Activated naive CD4-positive, alpha-beta T cell treated with anti-CD3 and anti-CD28 coated beads for 36 hours (primary cell): ENCODE measurements at regions of chr14 and their contacts with region 1.

Region 1: DNA sequence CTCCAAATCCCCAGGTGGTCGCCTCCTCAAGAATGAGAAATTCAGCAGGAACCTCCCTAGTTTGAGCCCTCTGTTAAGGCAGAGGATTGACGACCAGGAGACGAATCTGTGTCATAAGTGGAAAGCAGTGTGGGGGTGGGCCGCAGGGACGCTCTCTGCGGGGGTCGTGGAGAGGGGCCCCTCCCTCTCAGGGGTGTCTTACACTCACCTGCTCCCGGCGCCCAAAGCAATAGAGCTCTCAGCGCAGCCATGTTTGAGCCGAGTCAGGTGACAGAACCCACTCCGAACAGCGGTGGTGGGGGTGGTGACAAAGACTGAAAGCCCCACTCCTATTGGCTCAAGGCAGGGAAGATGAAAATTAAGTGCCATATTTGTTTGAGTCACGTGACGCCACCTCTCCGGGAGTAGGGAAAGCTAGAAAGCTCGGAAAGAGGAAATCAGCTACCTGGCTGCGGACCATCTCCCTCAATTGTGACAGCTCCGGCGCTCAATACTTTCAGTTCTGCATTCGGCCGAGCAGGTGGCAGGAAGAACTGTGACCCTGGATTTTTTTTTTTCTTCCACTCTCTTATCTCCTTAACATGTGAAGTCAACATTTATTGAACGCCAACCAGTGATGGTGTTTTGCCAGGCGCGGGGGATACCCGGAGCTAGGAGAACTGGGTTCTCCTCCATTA is at the start of gene ZFYVE26:
- DNase-seq: peak; percentile 96
- H3K4me3 Mint-ChIP-seq: peak within 1 kb of the TSS; percentile 95
- H3K27ac Mint-ChIP-seq: peak within 1 kb of the TSS; percentile 91
- H3K4me1 Mint-ChIP-seq: peaks cover 46% of the 10 kb centered on the region
- H3K27me3 Mint-ChIP-seq: no peaks in the 10 kb centered on the region
- total RNA-seq, gene ZFYVE26: 11.7 to 12.1 TPM

Region 2: GRCh38 chr14:67599698-67600561 is 216.5 kb before region 1 on chr14 and contains the start of gene PIGH:
- CTCF ChIA-PET with region 1: no interaction called
- intact Hi-C with region 1: loop called (anchors 5 kb)
- DNase-seq: peak; percentile 95
- H3K4me3 Mint-ChIP-seq: peak within 1 kb of the TSS; percentile 84
- H3K27ac Mint-ChIP-seq: peak within 1 kb of the TSS; percentile 93
- H3K4me1 Mint-ChIP-seq: peaks cover 38% of the 10 kb centered on the region
- H3K27me3 Mint-ChIP-seq: no peaks in the 10 kb centered on the region
- total RNA-seq, gene PIGH: 11.9 to 12.4 TPM

Region 3: GRCh38 chr14:67674481-67675169 is 141.8 kb before region 1 on chr14 and contains the start of gene VTI1B:
- CTCF ChIA-PET with region 1: no interaction called
- intact Hi-C with region 1: loop called (anchors 1 kb)
- DNase-seq: peak; percentile 68
- H3K4me3 Mint-ChIP-seq: peak within 1 kb of the TSS; percentile 80
- H3K27ac Mint-ChIP-seq: peak within 1 kb of the TSS; percentile 66
- H3K4me1 Mint-ChIP-seq: peaks cover 34% of the 10 kb centered on the region
- H3K27me3 Mint-ChIP-seq: no peaks in the 10 kb centered on the region
- total RNA-seq, gene VTI1B: 74.2 to 78.3 TPM

Region 4: DNA sequence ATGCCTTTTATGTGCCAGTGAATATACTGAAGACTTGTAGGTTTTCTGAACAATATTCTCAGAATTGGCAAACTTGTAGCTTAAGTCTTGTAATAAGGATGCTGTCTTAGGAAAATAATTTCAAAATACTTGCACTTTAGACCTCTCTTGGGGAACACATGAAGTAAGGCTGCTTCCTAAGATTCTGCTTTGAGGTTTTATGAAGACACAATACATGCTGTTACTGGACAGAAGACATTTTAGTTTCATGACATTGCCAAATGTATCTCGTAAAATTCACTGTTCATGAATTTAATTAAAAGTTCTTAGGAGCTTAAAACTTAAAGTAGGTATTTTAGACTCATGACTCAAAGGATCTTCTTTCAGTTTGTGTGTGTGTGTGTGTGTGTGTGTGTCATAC is 83.8 kb after region 1 on chr14:
- CTCF ChIA-PET with region 1: no interaction called
- intact Hi-C with region 1: no loop called
- DNase-seq: no peak
- H3K4me3 Mint-ChIP-seq: no peak overlapping the region
- H3K27ac Mint-ChIP-seq: no peak overlapping the region
- H3K4me1 Mint-ChIP-seq: peaks cover 2% of the 10 kb centered on the region
- H3K27me3 Mint-ChIP-seq: no peaks in the 10 kb centered on the region

Region 5: GRCh38 chr14:67919259-67920032 is 103.0 kb after region 1 on chr14:
- CTCF ChIA-PET with region 1: no interaction called
- intact Hi-C with region 1: no loop called
- DNase-seq: no peak
- H3K4me3 Mint-ChIP-seq: no peak overlapping the region
- H3K27ac Mint-ChIP-seq: no peak overlapping the region
- H3K4me1 Mint-ChIP-seq: no peaks in the 10 kb centered on the region
- H3K27me3 Mint-ChIP-seq: no peaks in the 10 kb centered on the region

Region 6: GRCh38 chr14:68210729-68211299 is 394.4 kb after region 1 on chr14:
- CTCF ChIA-PET with region 1: no interaction called
- intact Hi-C with region 1: loop called (anchors 2 kb)
- DNase-seq: peak; percentile 74
- H3K4me3 Mint-ChIP-seq: peak overlapping the region; percentile 11
- H3K27ac Mint-ChIP-seq: peak overlapping the region; percentile 57
- H3K4me1 Mint-ChIP-seq: peaks cover 48% of the 10 kb centered on the region
- H3K27me3 Mint-ChIP-seq: no peaks in the 10 kb centered on the region